Uterus (tissue), 4 donors: ENCODE measurements at regions of chr6 and their contacts with region 1.

Region 1: GRCh38 chr6:32177788-32178546 is at the start of gene RNF5:
- DNase-seq: peak; percentile 95 to 99
- H3K4me3 ChIP-seq: peak within 1 kb of the TSS; percentile 84 to 99
- H3K27ac ChIP-seq: peak within 1 kb of the TSS; percentile 96 to 98
- H3K4me1 ChIP-seq: peaks cover 9 to 14% of the 10 kb centered on the region in 2 donors
- H3K27me3 ChIP-seq: no peaks in the 10 kb centered on the region
- CTCF ChIP-seq: peak in 1 of 4 experiments; percentile 20
- POLR2A ChIP-seq: peak in 1 of 2 donors; percentile 37
- total RNA-seq, gene RNF5: 45.6 to 84.7 (median 56.3) TPM

Region 2: GRCh38 chr6:32127717-32128592 is 50.0 kb before region 1 on chr6 and contains the start of gene ATF6B:
- intact Hi-C with region 1: loop called (anchors 10 kb)
- DNase-seq: peak; percentile 96 to 100
- H3K4me3 ChIP-seq: peak within 1 kb of the TSS; percentile 93 to 97
- H3K27ac ChIP-seq: peak within 1 kb of the TSS; percentile 92 to 98
- H3K4me1 ChIP-seq: peaks cover 0 to 19% of the 10 kb centered on the region in 2 donors
- H3K27me3 ChIP-seq: no peaks in the 10 kb centered on the region
- CTCF ChIP-seq: no peak
- POLR2A ChIP-seq: peak; percentile 51 to 54
- total RNA-seq, gene ATF6B: 16.4 to 121 (median 33.6) TPM